PC-9 (cell line): ENCODE measurements at regions of chr9 and their contacts with region 1.

Region 1: GRCh38 chr9:124033348-124033747 is 21.8 kb downstream of the LHX2 start:
- DNase-seq: no peak
- H3K4me3 ChIP-seq: no peak overlapping the region
- H3K27ac ChIP-seq: no peak overlapping the region
- H3K4me1 ChIP-seq: no peaks in the 10 kb centered on the region
- H3K27me3 ChIP-seq: peaks cover 36% of the 10 kb centered on the region
- CTCF ChIP-seq: no peak

Region 2: DNA sequence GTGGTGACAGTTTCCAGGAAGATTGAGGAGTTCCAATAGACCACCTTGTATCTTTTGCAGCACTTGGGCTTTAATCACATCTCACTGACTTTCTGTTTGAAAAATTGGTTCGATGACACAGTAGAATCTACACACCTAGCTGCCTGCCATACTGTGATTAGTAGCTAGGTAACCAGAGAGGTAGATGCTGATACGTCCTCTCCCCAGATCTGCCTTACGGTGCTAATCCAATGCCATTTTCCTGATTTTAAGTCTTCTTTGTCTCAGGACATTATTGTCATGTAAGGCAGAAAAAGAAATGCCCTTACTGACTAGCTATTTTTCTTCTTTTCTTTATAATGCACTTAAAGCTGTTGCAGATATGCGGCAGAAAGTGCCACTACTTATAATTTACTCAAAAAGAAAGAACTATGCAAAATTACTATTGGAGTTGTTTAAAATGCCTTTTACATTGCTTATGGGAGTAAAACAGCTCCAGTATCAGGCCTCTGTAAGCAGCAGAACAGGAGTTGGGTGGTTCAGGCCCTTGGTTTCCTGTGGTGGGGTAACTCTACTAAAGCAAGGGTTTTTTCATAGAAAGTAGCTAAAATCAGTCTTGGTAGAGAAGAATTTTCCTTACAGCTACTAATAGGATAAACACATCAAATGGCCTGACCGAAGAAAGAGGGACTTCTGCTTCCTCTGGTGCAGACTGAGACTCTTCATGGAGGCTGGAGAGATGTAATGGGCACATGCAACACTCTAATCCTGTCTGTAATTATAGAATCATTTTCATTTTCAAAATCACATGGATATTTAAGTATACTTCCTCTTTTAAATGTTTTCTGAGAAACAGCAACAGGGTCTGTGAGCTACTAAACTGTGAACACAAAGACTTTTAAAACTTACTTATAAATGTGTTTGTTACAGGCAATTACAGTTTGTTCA is 1496.5 kb after region 1 on chr9:
- CTCF ChIA-PET with region 1: no interaction called
- POLR2A ChIA-PET with region 1: interaction called, 10 read pairs
- intact Hi-C with region 1: no loop called
- DNase-seq: no peak
- H3K4me3 ChIP-seq: no peak overlapping the region
- H3K27ac ChIP-seq: no peak overlapping the region
- H3K4me1 ChIP-seq: peaks cover 12% of the 10 kb centered on the region
- H3K27me3 ChIP-seq: no peaks in the 10 kb centered on the region
- CTCF ChIP-seq: no peak